Endothelial cell of umbilical vein (primary cell): ENCODE measurements at regions of chr18 and their contacts with region 1.

Region 1: DNA sequence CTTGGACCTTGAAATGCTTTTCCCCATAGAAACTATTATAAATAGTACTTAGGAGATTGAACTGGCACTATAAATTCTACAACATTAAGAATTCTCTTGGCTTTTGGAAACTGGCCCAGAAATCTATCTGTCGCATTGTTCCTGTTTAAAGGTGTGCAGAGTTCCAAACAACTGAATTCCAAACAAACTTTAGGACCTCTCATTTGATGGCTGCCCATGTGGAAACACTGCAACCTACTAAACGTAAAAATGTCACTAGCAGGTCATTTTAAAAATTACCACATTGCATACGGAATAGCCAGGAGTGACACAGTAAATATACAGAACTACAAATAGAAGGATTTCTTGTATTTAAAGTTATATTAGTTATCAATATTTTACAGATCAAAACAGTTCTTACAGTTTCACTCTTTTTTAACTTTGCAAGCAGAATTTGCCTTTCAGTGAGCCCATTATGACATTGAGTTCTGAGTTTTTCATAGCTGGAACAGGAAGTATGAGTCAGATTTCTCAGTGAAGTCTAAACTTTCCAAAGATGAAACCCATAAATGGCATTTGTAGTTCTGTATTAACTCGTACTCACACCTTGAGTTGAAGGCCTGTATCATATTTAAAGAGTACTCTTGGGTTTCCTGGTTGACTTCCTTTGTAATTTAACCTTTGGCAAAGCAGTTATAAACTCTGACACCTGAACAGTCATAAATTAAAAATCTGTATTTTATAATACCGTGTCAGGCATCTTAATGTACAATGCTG is 142.3 kb upstream of the BOD1L2 start:
- DNase-seq: peak; percentile 82
- H3K4me3 ChIP-seq: no peak overlapping the region
- H3K27ac ChIP-seq: no peak overlapping the region
- H3K4me1 ChIP-seq: peaks cover 14% of the 10 kb centered on the region
- H3K27me3 ChIP-seq: no peaks in the 10 kb centered on the region
- CTCF ChIP-seq: no peak
- POLR2A ChIP-seq: no peak

Region 2: DNA sequence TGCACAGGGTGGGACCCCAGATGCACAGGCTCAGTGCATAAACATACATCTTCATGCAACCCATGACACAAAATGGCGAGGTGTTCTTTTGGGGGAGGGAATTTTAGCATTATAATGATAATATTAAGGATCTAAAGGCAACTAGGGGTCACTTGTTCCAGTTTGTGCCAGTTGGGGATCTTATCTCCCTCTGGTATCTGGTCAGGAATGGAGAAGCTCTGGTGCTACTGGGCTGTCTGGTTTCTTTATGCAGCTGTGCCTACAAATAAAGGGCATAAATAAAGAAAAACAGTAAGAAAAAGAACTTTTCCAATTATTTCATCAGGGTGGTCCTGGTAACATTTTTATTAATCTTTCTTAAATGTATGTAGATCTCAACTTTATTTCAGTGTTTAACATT is 62.3 kb before region 1 on chr18:
- CTCF ChIA-PET with region 1: interaction called, 3 read pairs
- POLR2A ChIA-PET with region 1: no interaction called
- dilution Hi-C with region 1: no loop called
- intact Hi-C with region 1: loop called (anchors 5 kb)
- DNase-seq: no peak
- H3K4me3 ChIP-seq: no peak overlapping the region
- H3K27ac ChIP-seq: no peak overlapping the region
- H3K4me1 ChIP-seq: no peaks in the 10 kb centered on the region
- H3K27me3 ChIP-seq: no peaks in the 10 kb centered on the region
- CTCF ChIP-seq: no peak
- POLR2A ChIP-seq: no peak

Region 3: GRCh38 chr18:56992777-56993176 is 11.8 kb before region 1 on chr18:
- CTCF ChIA-PET with region 1: interaction called, 14 read pairs
- POLR2A ChIA-PET with region 1: no interaction called
- dilution Hi-C with region 1: no loop called
- intact Hi-C with region 1: no loop called
- DNase-seq: no peak
- H3K4me3 ChIP-seq: no peak overlapping the region
- H3K27ac ChIP-seq: no peak overlapping the region
- H3K4me1 ChIP-seq: no peaks in the 10 kb centered on the region
- H3K27me3 ChIP-seq: no peaks in the 10 kb centered on the region
- CTCF ChIP-seq: no peak
- POLR2A ChIP-seq: no peak

Region 4: DNA sequence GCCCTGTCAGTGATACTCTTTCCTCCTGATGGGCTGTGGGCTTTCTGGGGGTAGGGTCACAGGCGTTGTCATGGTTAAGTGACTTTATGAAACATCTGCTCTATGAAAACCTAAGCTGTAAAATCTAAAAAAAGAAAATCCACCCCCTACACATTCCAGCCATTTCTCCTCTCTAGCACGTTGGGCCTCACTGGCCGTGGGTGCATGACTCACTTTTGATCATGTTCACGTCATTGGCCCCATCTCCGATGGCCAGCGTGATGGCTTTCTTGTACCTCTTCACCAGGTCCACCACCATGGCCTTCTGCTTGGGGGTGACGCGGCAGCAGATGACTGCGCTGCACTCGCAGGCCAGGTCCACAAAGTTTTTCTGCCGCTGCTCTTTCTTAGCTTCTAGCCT is 656.4 kb after region 1 on chr18:
- CTCF ChIA-PET with region 1: no interaction called
- POLR2A ChIA-PET with region 1: no interaction called
- dilution Hi-C with region 1: no loop called
- intact Hi-C with region 1: no loop called
- DNase-seq: no peak
- H3K4me3 ChIP-seq: no peak overlapping the region
- H3K27ac ChIP-seq: no peak overlapping the region
- H3K4me1 ChIP-seq: peaks cover 9% of the 10 kb centered on the region
- H3K27me3 ChIP-seq: no peaks in the 10 kb centered on the region
- CTCF ChIP-seq: no peak
- POLR2A ChIP-seq: no peak